ENCODE measurements at regions of chrX and their contacts with region 1.

Region 1: GRCh38 chrX:135050603-135051002 is 1.3 kb downstream of the RTL8A start:
- DNase-seq: no peak
- H3K4me3 ChIP-seq: peak overlapping the region; percentile 56 to 72
- H3K27ac ChIP-seq: no peak overlapping the region
- H3K4me1 ChIP-seq: no peaks in the 10 kb centered on the region
- H3K27me3 ChIP-seq: no peaks in the 10 kb centered on the region
- CTCF ChIP-seq: no peak

Region 2: GRCh38 chrX:134753718-134754008 is 296.9 kb before region 1 on chrX:
- intact Hi-C with region 1: no loop called
- DNase-seq: no peak
- H3K4me3 ChIP-seq: no peak overlapping the region
- H3K27ac ChIP-seq: no peak overlapping the region
- H3K4me1 ChIP-seq: no peaks in the 10 kb centered on the region
- H3K27me3 ChIP-seq: no peaks in the 10 kb centered on the region
- CTCF ChIP-seq: no peak

Region 3: GRCh38 chrX:135024526-135024925 is 26.1 kb before region 1 on chrX:
- intact Hi-C with region 1: loop called (anchors 1 kb)
- DNase-seq: no peak
- H3K4me3 ChIP-seq: no peak overlapping the region
- H3K27ac ChIP-seq: no peak overlapping the region
- H3K4me1 ChIP-seq: no peaks in the 10 kb centered on the region
- H3K27me3 ChIP-seq: no peaks in the 10 kb centered on the region
- CTCF ChIP-seq: no peak

Region 4: GRCh38 chrX:135521405-135522189 is 471.0 kb after region 1 on chrX:
- intact Hi-C with region 1: loop called (anchors 5 kb)
- DNase-seq: peak; percentile 46 to 88
- H3K4me3 ChIP-seq: peak overlapping the region; percentile 60 to 82
- H3K27ac ChIP-seq: peak overlapping the region; percentile 94 to 97
- H3K4me1 ChIP-seq: no peaks in the 10 kb centered on the region
- H3K27me3 ChIP-seq: no peaks in the 10 kb centered on the region
- CTCF ChIP-seq: no peak

Measured in ascending aorta (tissue), 2 donors.